PC-9 (cell line): ENCODE measurements at regions of chr17 and their contacts with region 1.

Region 1: GRCh38 chr17:2386400-2387085 is 14.3 kb downstream of the MNT start:
- DNase-seq: peak in 1 of 2 experiments; percentile 89
- H3K4me3 ChIP-seq: no peak overlapping the region
- H3K27ac ChIP-seq: no peak overlapping the region
- H3K4me1 ChIP-seq: peaks cover 2% of the 10 kb centered on the region
- H3K27me3 ChIP-seq: no peaks in the 10 kb centered on the region
- CTCF ChIP-seq: no peak

Region 2: GRCh38 chr17:2452216-2452750 is 65.7 kb after region 1 on chr17:
- CTCF ChIA-PET with region 1: interaction called, 11 read pairs
- POLR2A ChIA-PET with region 1: no interaction called
- intact Hi-C with region 1: no loop called
- DNase-seq: no peak
- H3K4me3 ChIP-seq: no peak overlapping the region
- H3K27ac ChIP-seq: no peak overlapping the region
- H3K4me1 ChIP-seq: no peaks in the 10 kb centered on the region
- H3K27me3 ChIP-seq: no peaks in the 10 kb centered on the region
- CTCF ChIP-seq: no peak